Head of caudate nucleus (tissue), 42 donors: ENCODE measurements at regions of chr13 and their contacts with region 1.

Region 1: DNA sequence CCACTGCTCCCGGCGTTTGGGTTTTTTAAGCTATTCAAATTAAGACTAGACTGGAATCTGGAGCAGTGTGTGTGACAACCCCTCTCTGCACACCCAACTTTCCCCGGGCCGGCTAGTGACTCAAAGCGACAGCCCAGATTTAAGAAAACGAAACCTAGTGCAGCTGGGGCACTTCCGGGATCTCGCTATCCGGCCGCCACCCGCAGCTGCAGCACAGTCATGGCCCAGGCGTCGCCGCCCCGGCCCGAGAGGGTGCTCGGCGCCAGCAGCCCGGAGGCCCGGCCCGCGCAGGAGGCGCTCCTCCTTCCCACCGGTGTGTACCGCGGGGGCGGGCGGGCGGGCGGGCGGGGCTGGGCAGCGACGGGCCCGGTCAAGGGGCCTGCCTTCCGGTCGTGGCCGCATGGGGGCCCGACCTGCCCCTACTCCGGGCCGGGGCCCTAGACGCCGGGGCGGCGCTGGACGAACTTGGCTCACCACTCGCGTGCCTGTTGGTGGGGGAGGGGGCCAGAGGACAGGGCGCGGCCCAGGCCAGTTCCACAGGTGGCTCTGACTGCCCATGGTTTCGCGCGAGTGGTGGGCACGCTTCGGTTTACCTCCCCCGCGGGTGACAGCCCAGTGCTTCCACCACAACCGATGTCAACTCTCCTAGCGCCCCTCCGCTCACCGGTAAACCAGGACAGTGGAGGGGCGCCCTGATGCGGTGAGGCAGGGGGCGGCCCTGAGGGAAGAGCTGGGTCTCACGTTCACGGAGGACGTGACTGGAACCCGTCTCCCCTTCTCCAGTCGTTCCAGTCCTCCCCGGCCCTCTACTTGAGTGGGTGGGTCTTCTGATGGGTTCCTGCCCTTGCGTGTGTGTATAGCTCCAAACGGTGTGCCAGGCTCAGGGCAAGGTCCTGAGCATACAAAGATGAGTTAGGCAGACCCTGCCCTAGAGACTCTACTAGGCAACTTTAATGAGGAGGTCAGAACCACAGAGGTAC is at the start of gene PHF11:
- DNase-seq: peak; percentile 43 to 86 (median 70)

Region 2: GRCh38 chr13:49148405-49148804 is 347.7 kb before region 1 on chr13:
- intact Hi-C with region 1: no loop called
- DNase-seq: no peak

Region 3: GRCh38 chr13:49348751-49349150 is 147.3 kb before region 1 on chr13:
- intact Hi-C with region 1: no loop called
- DNase-seq: no peak

Region 4: DNA sequence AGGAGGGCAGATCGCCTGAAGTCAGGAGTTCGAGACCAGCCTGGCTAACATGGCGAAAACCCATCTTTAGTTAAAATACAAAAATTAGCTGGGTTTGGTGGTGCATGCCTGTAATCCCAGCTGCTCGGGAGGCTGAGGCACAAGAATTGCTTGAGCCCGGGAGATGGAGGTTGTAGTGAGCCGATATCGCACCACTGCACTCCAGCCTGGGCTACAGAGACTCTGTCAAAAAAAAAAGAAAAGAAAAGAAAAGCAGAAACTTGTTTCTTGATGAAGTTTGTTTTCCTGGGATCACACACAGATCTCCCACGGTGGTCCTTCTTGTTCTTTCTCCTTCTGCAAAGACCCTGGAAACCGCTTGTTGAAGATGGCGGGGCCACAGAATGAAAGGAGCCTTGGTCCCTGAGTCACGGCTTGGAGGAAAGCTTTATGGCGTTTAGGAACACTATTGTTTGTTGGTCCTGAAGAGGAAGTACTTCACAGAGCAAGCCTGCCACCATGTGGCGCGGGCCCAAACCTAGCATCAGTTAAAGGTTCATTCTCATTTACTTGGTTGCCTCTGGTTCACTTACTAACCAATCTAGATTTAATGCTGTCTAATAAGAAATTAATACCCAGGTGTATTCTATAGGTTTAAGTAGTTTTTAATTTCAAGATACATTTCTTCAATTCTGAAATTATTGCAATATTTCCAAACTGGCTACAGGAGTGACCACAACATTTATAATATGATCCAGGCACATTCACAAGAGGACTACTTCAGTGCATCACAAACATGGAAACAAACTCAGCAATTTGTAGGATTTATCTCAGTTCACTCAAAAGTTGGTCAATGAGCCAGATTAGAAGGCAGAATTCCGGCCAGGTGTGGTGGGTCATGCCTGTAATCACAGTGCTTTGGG is 110.9 kb after region 1 on chr13:
- intact Hi-C with region 1: loop called (anchors 10 kb)
- DNase-seq: peak; percentile 81 to 96 (median 91)